Right ventricle myocardium inferior (tissue), 1 donor: ENCODE measurements at regions of chr19 and their contacts with region 1.

Region 1: GRCh38 chr19:1551068-1552040 is 16.8 kb downstream of the MEX3D start:
- DNase-seq: no peak
- ATAC-seq: no peak

Region 2: GRCh38 chr19:1672038-1672768 is 120.8 kb after region 1 on chr19:
- intact Hi-C with region 1: loop called (anchors 1 kb)
- DNase-seq: peak; percentile 77
- ATAC-seq: peak; percentile 50

Region 3: DNA sequence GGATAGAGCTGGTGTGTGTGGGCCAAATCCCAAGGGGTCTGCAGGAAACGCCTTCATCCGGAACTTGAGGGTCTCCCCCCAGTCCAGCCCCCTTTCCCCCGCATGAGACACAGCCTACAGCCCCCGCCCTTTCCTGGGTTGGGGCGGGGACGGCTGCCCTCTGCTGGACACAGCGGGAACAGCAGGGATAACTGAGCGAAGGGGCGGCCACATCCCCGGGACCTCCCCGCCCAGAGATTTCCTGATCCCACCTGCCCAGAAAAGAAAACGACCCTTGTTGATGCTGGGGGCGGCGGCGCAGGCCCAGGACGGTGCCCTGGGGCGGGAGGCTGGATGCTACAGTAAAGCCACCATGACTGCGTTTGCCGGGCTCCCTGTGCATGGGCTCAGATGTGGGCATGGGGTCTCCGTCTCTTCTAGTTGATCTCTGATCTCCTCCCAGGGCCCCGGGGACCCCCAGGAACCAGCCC is 216.1 kb after region 1 on chr19:
- intact Hi-C with region 1: loop called (anchors 2 kb)
- DNase-seq: peak; percentile 77
- ATAC-seq: peak; percentile 48

Region 4: GRCh38 chr19:1875646-1876495 is 324.5 kb after region 1 on chr19:
- intact Hi-C with region 1: no loop called
- DNase-seq: peak; percentile 97
- ATAC-seq: peak; percentile 95